Gastrocnemius medialis (tissue), 4 donors: ENCODE measurements at regions of chr4 and their contacts with region 1.

Region 1: DNA sequence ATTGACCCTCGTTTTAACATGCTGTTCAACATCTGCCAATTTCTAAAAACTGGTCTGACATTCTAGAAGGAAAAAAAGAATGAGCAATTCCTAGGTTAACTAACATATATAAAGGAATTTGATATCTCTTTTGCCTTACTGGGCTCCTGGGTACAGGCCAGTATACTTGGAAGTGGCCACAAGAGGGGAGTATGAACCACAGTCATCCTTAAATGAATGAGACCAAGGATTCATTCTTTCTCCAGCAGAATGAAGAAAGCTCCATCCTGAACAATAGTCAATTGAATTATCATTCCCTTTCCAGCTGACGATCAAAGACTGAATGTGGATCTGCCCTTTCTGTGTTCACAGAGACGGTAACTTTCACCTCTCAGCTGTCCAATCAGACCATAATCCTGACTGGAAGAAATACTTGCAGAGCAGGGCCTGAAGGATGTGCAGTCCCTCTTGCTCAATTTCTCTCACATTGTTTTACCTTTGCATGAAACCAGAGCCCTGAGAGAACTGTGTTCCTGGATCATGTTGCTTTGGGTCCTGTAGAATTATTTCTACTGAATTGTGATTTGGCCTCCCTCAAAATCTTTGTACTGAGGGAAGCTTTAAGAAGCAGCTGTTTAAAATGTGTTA is 14.8 kb upstream of the SPARCL1 start:
- DNase-seq: no peak
- ATAC-seq: peak; percentile 39 to 55
- H3K4me3 ChIP-seq: no peak overlapping the region
- H3K27ac ChIP-seq: peak overlapping the region in 1 of 4 donors; percentile 52
- H3K4me1 ChIP-seq: peaks cover 4 to 8% of the 10 kb centered on the region in 2 donors
- H3K27me3 ChIP-seq: no peaks in the 10 kb centered on the region
- CTCF ChIP-seq: peak in 4 of 5 experiments; percentile 14 to 57 (median 36)
- POLR2A ChIP-seq: no peak

Region 2: GRCh38 chr4:87498446-87498900 is 45.5 kb before region 1 on chr4:
- in situ Hi-C with region 1: no loop called
- intact Hi-C with region 1: no loop called
- DNase-seq: no peak
- ATAC-seq: peak; percentile 15 to 26
- H3K4me3 ChIP-seq: no peak overlapping the region
- H3K27ac ChIP-seq: peak overlapping the region; percentile 44 to 61 (median 56)
- H3K4me1 ChIP-seq: peaks cover 0 to 39% of the 10 kb centered on the region in 2 donors
- H3K27me3 ChIP-seq: no peaks in the 10 kb centered on the region
- CTCF ChIP-seq: no peak
- POLR2A ChIP-seq: no peak

Region 3: GRCh38 chr4:87679449-87680169 is 135.7 kb after region 1 on chr4:
- in situ Hi-C with region 1: no loop called
- intact Hi-C with region 1: loop called (anchors 5 kb)
- DNase-seq: peak; percentile 31 to 34
- ATAC-seq: peak; percentile 81 to 82
- H3K4me3 ChIP-seq: no peak overlapping the region
- H3K27ac ChIP-seq: peak overlapping the region in 3 of 4 donors; percentile 37 to 52 (median 38)
- H3K4me1 ChIP-seq: peaks cover 0 to 10% of the 10 kb centered on the region in 2 donors
- H3K27me3 ChIP-seq: no peaks in the 10 kb centered on the region
- CTCF ChIP-seq: peak; percentile 21 to 72 (median 57)
- POLR2A ChIP-seq: no peak

Region 4: DNA sequence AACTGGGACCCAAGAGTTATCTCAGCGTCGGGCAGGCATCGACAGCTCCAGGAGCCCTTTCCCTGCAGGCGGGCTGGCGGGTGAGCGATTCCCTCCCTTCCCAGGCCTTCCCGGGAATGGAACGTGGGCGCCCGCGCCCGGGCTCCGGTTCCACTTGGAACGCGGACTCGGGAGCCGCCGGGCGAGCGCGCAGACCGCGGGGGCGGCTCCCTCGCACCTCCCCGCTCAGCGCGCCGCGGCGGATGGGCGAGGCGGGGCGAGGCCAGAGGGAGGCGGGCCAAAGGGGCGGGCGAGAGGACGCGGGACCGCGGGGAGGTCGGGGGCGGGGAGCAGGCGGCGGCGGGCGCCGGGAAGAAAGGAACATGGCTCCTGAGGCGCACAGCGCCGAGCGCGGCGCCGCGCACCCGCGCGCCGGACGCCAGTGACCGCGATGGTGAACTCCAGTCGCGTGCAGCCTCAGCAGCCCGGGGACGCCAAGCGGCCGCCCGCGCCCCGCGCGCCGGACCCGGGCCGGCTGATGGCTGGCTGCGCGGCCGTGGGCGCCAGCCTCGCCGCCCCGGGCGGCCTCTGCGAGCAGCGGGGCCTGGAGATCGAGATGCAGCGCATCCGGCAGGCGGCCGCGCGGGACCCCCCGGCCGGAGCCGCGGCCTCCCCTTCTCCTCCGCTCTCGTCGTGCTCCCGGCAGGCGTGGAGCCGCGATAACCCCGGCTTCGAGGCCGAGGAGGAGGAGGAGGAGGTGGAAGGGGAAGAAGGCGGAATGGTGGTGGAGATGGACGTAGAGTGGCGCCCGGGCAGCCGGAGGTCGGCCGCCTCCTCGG is 463.6 kb after region 1 on chr4 and contains the start of gene PKD2:
- in situ Hi-C with region 1: loop called in 1 of 4 experiments (anchors 25 kb)
- intact Hi-C with region 1: no loop called
- DNase-seq: peak; percentile 53
- ATAC-seq: peak; percentile 76 to 78
- H3K4me3 ChIP-seq: peak within 1 kb of the TSS; percentile 68 to 79 (median 74)
- H3K27ac ChIP-seq: peak within 1 kb of the TSS; percentile 63 to 75 (median 73)
- H3K4me1 ChIP-seq: peaks cover 20 to 21% of the 10 kb centered on the region in 2 donors
- H3K27me3 ChIP-seq: no peaks in the 10 kb centered on the region
- CTCF ChIP-seq: no peak
- POLR2A ChIP-seq: peak; percentile 68 to 72
- total RNA-seq, gene PKD2: 4.1 to 7.6 (median 6.2) TPM